ENCODE measurements at regions of chr4 and their contacts with region 1.

Region 1: DNA sequence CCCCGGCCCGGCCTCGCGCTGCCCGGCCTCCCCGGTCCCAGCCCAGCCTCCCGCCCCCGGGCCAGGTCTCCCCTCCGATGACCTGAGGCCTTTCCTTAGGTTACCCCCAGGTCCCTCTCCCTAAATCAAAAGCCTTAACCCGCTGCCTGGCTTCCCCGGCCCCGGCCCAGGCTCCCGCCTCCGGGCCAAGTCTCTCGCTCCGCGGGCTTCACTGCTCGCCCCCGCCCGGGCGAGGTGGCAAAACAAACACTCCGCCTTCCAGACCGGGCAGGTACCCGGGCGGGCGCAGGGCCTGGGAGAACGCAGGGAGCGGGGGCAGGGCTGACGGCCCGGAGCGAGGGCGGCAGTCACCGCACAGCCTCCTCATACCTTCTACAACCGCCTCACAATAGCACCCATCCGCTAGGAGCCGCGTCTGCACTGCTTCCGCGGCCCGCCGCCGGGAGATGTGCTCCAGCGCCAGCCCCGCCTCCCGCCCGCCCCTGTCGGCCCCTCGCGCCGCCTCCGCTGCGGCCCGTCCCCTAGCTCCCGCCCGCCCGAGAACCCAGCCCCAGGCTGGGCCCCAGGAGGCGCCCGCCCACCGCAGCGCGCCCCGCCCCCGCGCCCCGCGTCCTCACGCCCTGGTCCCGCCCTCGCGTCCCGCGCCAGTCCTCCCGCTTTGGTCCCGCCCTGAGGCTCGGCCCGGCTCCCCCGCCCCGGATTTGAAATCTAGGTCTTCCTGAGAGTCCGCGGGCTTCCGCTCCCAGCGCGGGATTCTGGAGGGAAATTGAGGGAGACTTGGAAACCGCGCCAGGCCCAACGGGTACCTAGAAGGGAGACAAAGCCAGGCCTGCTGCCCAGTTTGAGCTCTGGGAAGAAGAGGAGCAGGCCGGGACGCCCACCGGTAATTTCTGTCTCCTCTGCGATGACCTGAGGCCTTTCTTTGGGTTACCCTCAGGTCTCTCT is at the starts of genes CASP3 and PRIMPOL:
- DNase-seq: peak; percentile 97 to 99 (median 98)
- ATAC-seq: peak; percentile 92 to 98 (median 95)
- H3K4me3 ChIP-seq: peak within 1 kb of the TSS; percentile 65 to 95 (median 88)
- H3K27ac ChIP-seq: peak within 1 kb of the TSS; percentile 89 to 99 (median 98)
- H3K4me1 ChIP-seq: peaks cover 5 to 53% (median 48%) of the 10 kb centered on the region in 12 donors
- H3K27me3 ChIP-seq: no peaks in the 10 kb centered on the region
- CTCF ChIP-seq: peak in 11 of 12 donors; percentile 9 to 60 (median 24)
- POLR2A ChIP-seq: peak in 1 of 2 donors; percentile 92
- total RNA-seq, gene CASP3: 7.3 to 32.0 (median 15.8) TPM
- total RNA-seq, gene PRIMPOL: 5.4 to 12.4 (median 10.6) TPM

Region 2: GRCh38 chr4:184263910-184264732 is 385.2 kb before region 1 on chr4:
- intact Hi-C with region 1: loop called in 4 of 10 experiments (anchors 2 to 10 kb)
- DNase-seq: peak; percentile 91 to 94 (median 93)
- ATAC-seq: peak; percentile 63 to 85 (median 82)
- H3K4me3 ChIP-seq: no peak overlapping the region
- H3K27ac ChIP-seq: peak overlapping the region in 1 of 12 donors; percentile 1
- H3K4me1 ChIP-seq: peaks cover 0 to 39% (median 0%) of the 10 kb centered on the region in 12 donors
- H3K27me3 ChIP-seq: no peaks in the 10 kb centered on the region
- CTCF ChIP-seq: peak; percentile 86 to 99 (median 94)
- POLR2A ChIP-seq: no peak

Region 3: DNA sequence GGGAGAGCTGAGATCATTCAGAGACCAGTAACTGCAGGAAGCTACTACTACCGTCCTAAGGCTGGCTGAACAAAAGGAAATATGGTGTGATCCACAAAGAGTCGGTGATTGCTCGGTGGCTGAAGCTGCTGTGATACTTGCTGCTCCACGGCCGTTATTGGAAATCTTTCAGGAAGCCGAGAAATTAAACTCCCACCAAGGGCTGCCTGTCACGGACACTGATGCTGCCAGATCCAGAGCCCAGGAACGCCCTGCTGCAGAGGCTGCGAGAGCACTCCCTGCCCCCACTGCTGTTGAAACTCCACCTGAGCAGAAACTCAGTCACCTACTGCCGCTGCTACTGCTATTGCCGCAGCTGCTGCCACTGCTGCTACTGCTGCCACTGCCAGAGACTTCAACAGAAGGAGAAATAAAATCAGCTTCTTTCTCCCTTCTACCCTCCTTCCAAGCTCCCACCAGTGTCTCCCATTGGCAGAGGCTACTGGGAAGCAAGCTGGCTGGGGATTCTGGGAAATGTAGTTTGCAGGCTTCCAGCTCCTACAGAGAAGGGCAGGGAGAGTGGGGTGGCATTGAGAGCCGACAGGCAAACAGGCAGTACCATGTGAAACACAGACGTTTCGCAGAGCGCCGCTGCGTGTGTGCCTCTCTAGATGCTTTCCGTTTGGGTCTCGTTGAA is 305.7 kb before region 1 on chr4:
- intact Hi-C with region 1: loop called in 1 of 10 experiments (anchors 10 kb)
- DNase-seq: peak; percentile 75 to 85 (median 83)
- ATAC-seq: peak; percentile 75 to 84 (median 76)
- H3K4me3 ChIP-seq: peak overlapping the region; percentile 31 to 77 (median 62)
- H3K27ac ChIP-seq: peak overlapping the region in 11 of 12 donors; percentile 71 to 94 (median 85)
- H3K4me1 ChIP-seq: peaks cover 8 to 71% (median 47%) of the 10 kb centered on the region in 12 donors
- H3K27me3 ChIP-seq: no peaks in the 10 kb centered on the region
- CTCF ChIP-seq: no peak
- POLR2A ChIP-seq: no peak

Region 4: GRCh38 chr4:184474263-184475095 is 174.8 kb before region 1 on chr4 and contains the start of gene IRF2:
- intact Hi-C with region 1: loop called in 5 of 10 experiments (anchors 2 to 10 kb)
- DNase-seq: peak; percentile 98
- ATAC-seq: peak; percentile 90 to 95 (median 91)
- H3K4me3 ChIP-seq: peak within 1 kb of the TSS; percentile 71 to 100 (median 90)
- H3K27ac ChIP-seq: peak within 1 kb of the TSS; percentile 88 to 100 (median 98)
- H3K4me1 ChIP-seq: peaks cover 4 to 67% (median 47%) of the 10 kb centered on the region in 12 donors
- H3K27me3 ChIP-seq: no peaks in the 10 kb centered on the region
- CTCF ChIP-seq: peak in 2 of 12 donors; percentile 4 to 18
- POLR2A ChIP-seq: peak in 1 of 2 donors; percentile 94
- total RNA-seq, gene IRF2: 21.7 to 47.2 (median 28.7) TPM

Region 5: GRCh38 chr4:184544788-184545409 is 104.4 kb before region 1 on chr4:
- intact Hi-C with region 1: loop called in 1 of 10 experiments (anchors 5 kb)
- DNase-seq: no peak
- ATAC-seq: peak in 1 of 4 donors; percentile 34
- H3K4me3 ChIP-seq: no peak overlapping the region
- H3K27ac ChIP-seq: no peak overlapping the region
- H3K4me1 ChIP-seq: peaks cover 0 to 4% (median 0%) of the 10 kb centered on the region in 12 donors
- H3K27me3 ChIP-seq: no peaks in the 10 kb centered on the region
- CTCF ChIP-seq: no peak
- POLR2A ChIP-seq: no peak

Region 6: GRCh38 chr4:184805462-184806228 is 156.3 kb after region 1 on chr4:
- intact Hi-C with region 1: loop called in 1 of 10 experiments (anchors 10 kb)
- DNase-seq: peak; percentile 83 to 94 (median 86)
- ATAC-seq: peak; percentile 90 to 96 (median 94)
- H3K4me3 ChIP-seq: peak overlapping the region in 11 of 12 donors; percentile 14 to 50 (median 39)
- H3K27ac ChIP-seq: peak overlapping the region; percentile 71 to 94 (median 84)
- H3K4me1 ChIP-seq: peaks cover 7 to 73% (median 47%) of the 10 kb centered on the region in 12 donors
- H3K27me3 ChIP-seq: no peaks in the 10 kb centered on the region
- CTCF ChIP-seq: peak in 2 of 12 donors; percentile 13 to 17
- POLR2A ChIP-seq: peak; percentile 13 to 60

Measured in heart left ventricle (tissue), 16 donors.